ENCODE measurements at regions of chr19 and their contacts with region 1.

Region 1: GRCh38 chr19:2475702-2476450 is at the start of gene GADD45B:
- DNase-seq: peak; percentile 97
- ATAC-seq: peak; percentile 46
- H3K4me3 Mint-ChIP-seq: peak within 1 kb of the TSS; percentile 99
- H3K27ac Mint-ChIP-seq: peak within 1 kb of the TSS; percentile 90
- H3K4me1 Mint-ChIP-seq: peaks cover 19% of the 10 kb centered on the region
- H3K27me3 Mint-ChIP-seq: no peaks in the 10 kb centered on the region
- CTCF ChIP-seq: no peak
- total RNA-seq, gene GADD45B: 98.3 to 102 TPM

Region 2: DNA sequence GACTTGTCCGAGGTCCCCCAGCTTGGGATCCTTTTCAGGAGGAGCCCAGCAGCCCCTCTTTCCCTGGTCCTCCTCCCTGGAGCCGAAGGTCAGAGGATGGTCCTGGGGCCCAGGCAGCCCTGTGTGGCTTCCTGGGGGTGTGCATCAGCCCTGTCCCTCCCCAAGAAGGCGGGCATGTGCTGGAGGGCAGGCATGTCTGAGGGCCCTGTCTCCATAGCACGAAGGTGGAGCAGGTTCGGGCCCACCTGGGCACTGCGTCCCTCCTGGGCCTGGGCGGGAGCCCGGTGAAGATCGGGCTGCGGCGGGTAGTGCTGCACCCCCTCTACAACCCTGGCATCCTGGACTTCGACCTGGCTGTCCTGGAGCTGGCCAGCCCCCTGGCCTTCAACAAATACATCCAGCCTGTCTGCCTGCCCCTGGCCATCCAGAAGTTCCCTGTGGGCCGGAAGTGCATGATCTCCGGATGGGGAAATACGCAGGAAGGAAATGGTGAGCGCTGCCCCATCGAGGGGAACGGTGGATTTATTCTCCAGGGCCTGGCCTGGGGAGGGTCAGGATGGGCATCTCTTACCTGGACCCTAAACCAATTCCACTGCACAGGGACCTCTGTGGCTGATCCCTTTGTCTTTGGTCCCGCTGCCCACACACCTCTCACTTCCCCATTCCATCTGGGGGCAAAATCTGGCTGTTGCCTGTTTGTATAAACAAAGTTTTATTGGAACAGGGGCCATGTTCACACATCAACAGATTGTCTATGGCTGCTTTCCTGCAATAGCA is 59.4 kb before region 1 on chr19:
- CTCF ChIA-PET with region 1: no interaction called
- POLR2A ChIA-PET with region 1: no interaction called
- intact Hi-C with region 1: no loop called
- DNase-seq: no peak
- ATAC-seq: no peak
- H3K4me3 Mint-ChIP-seq: no peak overlapping the region
- H3K27ac Mint-ChIP-seq: no peak overlapping the region
- H3K4me1 Mint-ChIP-seq: no peaks in the 10 kb centered on the region
- H3K27me3 Mint-ChIP-seq: no peaks in the 10 kb centered on the region
- CTCF ChIP-seq: no peak

Region 3: DNA sequence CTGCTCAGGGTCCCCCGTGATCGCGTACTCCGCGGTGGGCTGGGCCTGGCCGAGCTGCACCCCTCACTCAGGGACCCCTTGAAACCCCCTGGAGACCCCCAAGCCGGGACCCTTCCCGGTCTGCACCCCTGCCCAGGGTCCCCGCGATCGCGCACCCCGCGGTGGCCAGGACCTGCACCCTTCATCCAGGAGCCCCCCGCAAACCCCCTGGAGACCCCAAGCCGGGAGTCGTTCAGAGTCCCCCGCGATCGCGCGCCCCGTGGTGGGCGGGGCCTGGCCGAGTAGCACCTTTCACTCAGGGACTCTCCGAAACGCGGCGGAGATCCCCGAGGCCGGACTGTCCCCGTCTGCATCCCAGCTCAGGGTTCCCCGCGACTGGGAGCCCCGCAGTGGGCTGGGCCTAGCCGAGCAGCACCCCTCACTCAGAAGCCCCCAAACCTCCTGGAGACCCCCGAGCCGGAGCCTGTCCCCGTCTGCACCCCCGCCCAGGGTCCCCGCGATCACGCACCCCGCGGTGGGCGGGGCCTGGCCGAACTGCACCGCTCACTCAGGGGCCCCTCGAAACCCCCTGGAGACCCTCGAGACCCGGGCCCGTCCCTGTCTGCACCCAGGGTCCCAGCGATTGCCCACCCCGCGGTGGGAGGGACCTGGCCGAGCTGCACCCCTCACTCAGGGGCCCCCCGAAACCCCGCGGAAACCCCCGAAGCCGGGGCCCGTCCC is 19.9 kb before region 1 on chr19:
- CTCF ChIA-PET with region 1: interaction called, 5 read pairs
- POLR2A ChIA-PET with region 1: interaction called, 11 read pairs
- intact Hi-C with region 1: no loop called
- DNase-seq: peak; percentile 69
- ATAC-seq: peak; percentile 50
- H3K4me3 Mint-ChIP-seq: peak overlapping the region; percentile 82
- H3K27ac Mint-ChIP-seq: peak overlapping the region; percentile 91
- H3K4me1 Mint-ChIP-seq: peaks cover 25% of the 10 kb centered on the region
- H3K27me3 Mint-ChIP-seq: no peaks in the 10 kb centered on the region
- CTCF ChIP-seq: no peak

Region 4: GRCh38 chr19:2494444-2495129 is 18.7 kb after region 1 on chr19:
- CTCF ChIA-PET with region 1: interaction called, 6 read pairs
- POLR2A ChIA-PET with region 1: interaction called, 12 read pairs
- intact Hi-C with region 1: no loop called
- DNase-seq: peak; percentile 57
- ATAC-seq: peak; percentile 68
- H3K4me3 Mint-ChIP-seq: peak overlapping the region; percentile 47
- H3K27ac Mint-ChIP-seq: no peak overlapping the region
- H3K4me1 Mint-ChIP-seq: peaks cover 27% of the 10 kb centered on the region
- H3K27me3 Mint-ChIP-seq: peaks cover 24% of the 10 kb centered on the region
- CTCF ChIP-seq: no peak

Region 5: DNA sequence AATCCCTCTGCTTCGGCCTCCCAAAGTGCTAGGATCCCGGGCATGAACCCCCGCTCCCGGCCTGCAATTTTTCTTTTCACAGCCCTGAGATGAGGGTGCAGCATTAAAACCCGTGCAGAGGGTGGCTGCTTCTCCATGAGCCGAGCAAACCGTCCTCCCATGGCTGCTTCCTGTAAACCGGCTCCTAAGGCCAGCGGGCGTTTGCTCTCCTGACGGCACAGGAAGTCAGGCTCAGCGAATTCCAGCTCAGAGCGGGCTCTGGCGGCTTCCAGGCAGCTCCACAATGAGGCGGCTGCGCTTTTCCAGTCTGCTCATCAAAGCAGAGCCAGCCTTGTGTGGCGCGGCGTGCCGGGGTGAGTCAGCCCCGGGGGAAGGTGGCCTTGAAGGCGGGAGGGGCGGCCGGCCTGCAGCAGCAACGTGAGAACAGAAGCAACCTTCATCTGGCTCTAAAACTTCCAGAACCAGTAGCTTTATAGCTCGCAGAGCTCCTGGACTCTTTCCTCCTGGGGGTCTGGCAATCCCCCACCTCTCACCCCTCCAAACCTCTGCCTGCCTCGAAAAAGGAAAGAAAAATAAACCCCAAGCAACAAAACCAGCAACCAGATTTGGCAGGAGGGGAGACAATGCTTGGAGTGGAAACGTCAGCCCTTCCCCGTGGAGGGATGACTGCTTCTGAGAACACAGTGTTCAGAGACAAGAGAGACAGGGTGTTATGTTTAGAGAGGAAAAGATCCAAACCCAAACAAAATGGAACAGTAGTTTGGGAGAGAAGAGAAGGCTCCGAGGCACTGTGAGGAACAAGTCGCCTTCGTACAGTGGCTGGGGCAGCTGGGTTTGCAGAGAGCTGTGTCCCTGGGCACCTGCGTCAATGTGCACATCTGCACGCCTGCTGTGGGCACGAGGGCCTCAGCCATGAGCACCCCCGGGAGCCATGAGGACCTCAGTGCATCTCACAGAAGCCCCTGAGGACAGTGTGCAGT is 67.9 kb after region 1 on chr19:
- CTCF ChIA-PET with region 1: interaction called, 6 read pairs
- POLR2A ChIA-PET with region 1: interaction called, 29 read pairs
- intact Hi-C with region 1: no loop called
- DNase-seq: peak; percentile 86
- ATAC-seq: peak; percentile 94
- H3K4me3 Mint-ChIP-seq: peak overlapping the region; percentile 58
- H3K27ac Mint-ChIP-seq: peak overlapping the region; percentile 79
- H3K4me1 Mint-ChIP-seq: peaks cover 19% of the 10 kb centered on the region
- H3K27me3 Mint-ChIP-seq: no peaks in the 10 kb centered on the region
- CTCF ChIP-seq: no peak

Region 6: GRCh38 chr19:2561895-2562294 is 86.0 kb after region 1 on chr19:
- CTCF ChIA-PET with region 1: interaction called, 14 read pairs
- POLR2A ChIA-PET with region 1: interaction called, 46 read pairs
- intact Hi-C with region 1: no loop called
- DNase-seq: peak; percentile 97
- ATAC-seq: peak; percentile 95
- H3K4me3 Mint-ChIP-seq: peak overlapping the region; percentile 74
- H3K27ac Mint-ChIP-seq: peak overlapping the region; percentile 86
- H3K4me1 Mint-ChIP-seq: peaks cover 27% of the 10 kb centered on the region
- H3K27me3 Mint-ChIP-seq: no peaks in the 10 kb centered on the region
- CTCF ChIP-seq: no peak

Region 7: DNA sequence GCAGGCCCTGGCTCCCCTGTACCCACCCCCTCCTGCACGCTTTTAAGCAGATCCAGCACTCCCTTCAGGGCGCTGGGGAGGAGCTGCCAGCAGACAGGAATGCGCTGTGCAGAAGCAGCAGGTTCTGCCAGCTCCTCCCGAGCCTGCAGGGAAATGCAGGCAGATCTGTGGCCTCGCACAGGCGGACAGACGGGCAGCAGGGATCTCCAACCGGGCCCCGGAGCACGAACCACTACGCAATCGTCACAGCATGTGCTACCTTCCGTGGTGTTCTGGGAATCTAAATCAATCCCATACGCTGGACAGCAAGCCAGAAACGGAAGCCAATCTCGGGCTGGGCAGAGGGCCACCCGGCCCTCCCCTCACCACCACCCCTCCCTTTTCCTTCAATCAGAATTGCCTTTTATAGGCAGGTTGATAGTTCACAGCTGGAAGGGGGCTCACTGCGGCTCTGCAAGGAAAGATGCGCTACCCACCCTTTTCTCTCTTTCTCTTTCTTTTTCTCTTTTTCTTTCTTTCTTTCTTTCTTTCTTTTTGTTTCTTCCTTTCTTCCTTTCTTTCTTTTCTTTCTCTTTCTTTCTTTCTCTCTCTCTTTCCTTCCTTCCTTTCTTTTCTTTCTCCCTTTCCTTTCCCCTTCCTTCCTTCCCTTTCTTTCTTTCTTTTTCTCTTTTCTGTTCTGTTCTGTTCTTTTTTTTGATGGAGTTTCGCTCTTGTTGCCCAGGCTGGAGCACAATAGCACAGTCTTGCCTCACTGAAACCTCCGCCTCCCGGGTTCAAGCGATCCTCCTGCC is 126.7 kb after region 1 on chr19:
- CTCF ChIA-PET with region 1: interaction called, 87 read pairs
- POLR2A ChIA-PET with region 1: interaction called, 104 read pairs
- intact Hi-C with region 1: no loop called
- DNase-seq: no peak
- ATAC-seq: no peak
- H3K4me3 Mint-ChIP-seq: no peak overlapping the region
- H3K27ac Mint-ChIP-seq: no peak overlapping the region
- H3K4me1 Mint-ChIP-seq: peaks cover 17% of the 10 kb centered on the region
- H3K27me3 Mint-ChIP-seq: peaks cover 8% of the 10 kb centered on the region
- CTCF ChIP-seq: no peak

Region 8: DNA sequence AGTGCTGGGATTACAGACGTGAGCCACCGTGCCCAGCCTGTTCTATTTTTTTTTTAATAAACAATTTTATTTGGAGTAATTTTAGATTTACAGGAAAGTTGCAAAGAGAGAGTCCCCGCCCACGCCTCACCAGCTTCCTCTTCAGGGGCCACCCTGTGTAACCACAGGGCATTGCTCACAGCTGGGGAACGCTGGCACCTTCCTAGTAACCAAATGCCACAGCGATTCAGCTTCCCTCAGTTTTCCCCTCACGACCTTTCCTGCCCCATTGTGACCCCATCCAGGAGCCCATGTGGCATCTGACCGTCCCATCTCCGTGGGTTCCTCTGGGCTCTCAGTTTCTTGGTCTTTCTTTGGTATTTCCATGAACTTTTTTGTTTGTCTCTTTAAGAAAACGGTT is 142.7 kb after region 1 on chr19:
- CTCF ChIA-PET with region 1: interaction called, 91 read pairs
- POLR2A ChIA-PET with region 1: interaction called, 168 read pairs
- intact Hi-C with region 1: no loop called
- DNase-seq: peak; percentile 95
- ATAC-seq: no peak
- H3K4me3 Mint-ChIP-seq: peak overlapping the region; percentile 42
- H3K27ac Mint-ChIP-seq: peak overlapping the region; percentile 86
- H3K4me1 Mint-ChIP-seq: peaks cover 65% of the 10 kb centered on the region
- H3K27me3 Mint-ChIP-seq: no peaks in the 10 kb centered on the region
- CTCF ChIP-seq: no peak